ENCODE measurements at regions of chr11 and their contacts with region 1.

Region 1: GRCh38 chr11:8604078-8604723 is 10.2 kb upstream of the STK33 start:
- DNase-seq: peak; percentile 56
- H3K4me3 Mint-ChIP-seq: no peak overlapping the region
- H3K27ac Mint-ChIP-seq: no peak overlapping the region
- H3K4me1 Mint-ChIP-seq: no peaks in the 10 kb centered on the region
- H3K27me3 Mint-ChIP-seq: peaks cover 19% of the 10 kb centered on the region

Region 2: GRCh38 chr11:8225589-8226036 is 378.6 kb before region 1 on chr11:
- CTCF ChIA-PET with region 1: no interaction called
- intact Hi-C with region 1: no loop called
- DNase-seq: peak; percentile 75
- H3K4me3 Mint-ChIP-seq: no peak overlapping the region
- H3K27ac Mint-ChIP-seq: no peak overlapping the region
- H3K4me1 Mint-ChIP-seq: no peaks in the 10 kb centered on the region
- H3K27me3 Mint-ChIP-seq: no peaks in the 10 kb centered on the region

Region 3: GRCh38 chr11:8338138-8338537 is 266.1 kb before region 1 on chr11:
- CTCF ChIA-PET with region 1: no interaction called
- intact Hi-C with region 1: loop called (anchors 1 kb)
- DNase-seq: peak; percentile 49
- H3K4me3 Mint-ChIP-seq: no peak overlapping the region
- H3K27ac Mint-ChIP-seq: no peak overlapping the region
- H3K4me1 Mint-ChIP-seq: no peaks in the 10 kb centered on the region
- H3K27me3 Mint-ChIP-seq: peaks cover 2% of the 10 kb centered on the region

Region 4: GRCh38 chr11:8676458-8676857 is 72.3 kb after region 1 on chr11:
- CTCF ChIA-PET with region 1: no interaction called
- intact Hi-C with region 1: loop called (anchors 2 kb)
- DNase-seq: no peak
- H3K4me3 Mint-ChIP-seq: no peak overlapping the region
- H3K27ac Mint-ChIP-seq: no peak overlapping the region
- H3K4me1 Mint-ChIP-seq: peaks cover 7% of the 10 kb centered on the region
- H3K27me3 Mint-ChIP-seq: no peaks in the 10 kb centered on the region

Measured in activated naive CD4-positive, alpha-beta T cell treated with anti-CD3 and anti-CD28 coated beads for 36 hours (primary cell).